Psoas muscle (tissue), 8 donors: ENCODE measurements at regions of chr5 and their contacts with region 1.

Region 1: GRCh38 chr5:34045996-34046395 is 3.0 kb upstream of the C1QTNF3 start:
- DNase-seq: no peak
- ATAC-seq: no peak
- H3K4me3 ChIP-seq: no peak overlapping the region
- H3K27ac ChIP-seq: no peak overlapping the region
- H3K4me1 ChIP-seq: peaks cover 33% of the 10 kb centered on the region
- H3K27me3 ChIP-seq: no peaks in the 10 kb centered on the region
- CTCF ChIP-seq: no peak

Region 2: GRCh38 chr5:34007621-34008600 is 38.1 kb before region 1 on chr5 and contains the start of gene AMACR:
- intact Hi-C with region 1: loop called in 1 of 2 experiments (anchors 5 kb)
- DNase-seq: peak; percentile 94 to 97
- ATAC-seq: peak; percentile 96 to 97 (median 96)
- H3K4me3 ChIP-seq: peak within 1 kb of the TSS; percentile 85
- H3K27ac ChIP-seq: peak within 1 kb of the TSS; percentile 87
- H3K4me1 ChIP-seq: peaks cover 14% of the 10 kb centered on the region
- H3K27me3 ChIP-seq: no peaks in the 10 kb centered on the region
- CTCF ChIP-seq: no peak
- total RNA-seq, gene AMACR: 5.1 to 14.4 (median 7.4) TPM

Region 3: DNA sequence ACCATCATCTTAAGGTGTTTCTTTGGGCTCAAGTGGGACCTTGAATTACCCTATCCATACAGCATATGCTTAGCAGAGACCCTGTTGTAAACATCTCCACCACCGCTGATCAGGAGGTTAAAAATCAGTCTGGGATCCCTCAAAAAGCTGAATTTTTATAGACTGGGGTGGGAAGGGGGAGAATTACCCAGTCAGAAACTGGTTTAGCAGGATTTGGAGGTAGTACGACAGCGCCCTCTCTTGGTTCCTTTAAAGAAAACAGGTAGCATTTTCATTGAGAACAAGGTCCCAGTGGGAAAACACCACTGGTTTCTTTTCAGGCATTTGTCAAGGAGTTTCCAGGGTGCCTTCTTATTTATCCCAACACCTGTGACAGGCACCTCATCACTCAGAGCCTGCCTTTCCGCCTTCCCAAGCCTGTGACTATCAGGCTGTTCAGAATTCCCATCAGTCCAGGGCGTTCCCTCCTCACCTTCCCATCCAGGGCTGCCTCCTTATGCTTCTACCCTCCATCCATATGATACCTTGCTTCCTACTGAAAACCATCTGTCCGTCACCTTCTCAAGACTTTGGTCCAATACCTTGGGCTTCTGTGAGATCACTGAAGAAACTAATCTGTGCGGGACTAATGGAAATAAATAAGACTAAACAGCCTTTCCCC is 406.3 kb after region 1 on chr5:
- intact Hi-C with region 1: no loop called
- DNase-seq: no peak
- ATAC-seq: no peak
- H3K4me3 ChIP-seq: no peak overlapping the region
- H3K27ac ChIP-seq: no peak overlapping the region
- H3K4me1 ChIP-seq: no peaks in the 10 kb centered on the region
- H3K27me3 ChIP-seq: peaks cover 0 to 2% (median 0%) of the 10 kb centered on the region in 3 donors
- CTCF ChIP-seq: no peak